ENCODE measurements at regions of chr1 and their contacts with region 1.

Region 1: DNA sequence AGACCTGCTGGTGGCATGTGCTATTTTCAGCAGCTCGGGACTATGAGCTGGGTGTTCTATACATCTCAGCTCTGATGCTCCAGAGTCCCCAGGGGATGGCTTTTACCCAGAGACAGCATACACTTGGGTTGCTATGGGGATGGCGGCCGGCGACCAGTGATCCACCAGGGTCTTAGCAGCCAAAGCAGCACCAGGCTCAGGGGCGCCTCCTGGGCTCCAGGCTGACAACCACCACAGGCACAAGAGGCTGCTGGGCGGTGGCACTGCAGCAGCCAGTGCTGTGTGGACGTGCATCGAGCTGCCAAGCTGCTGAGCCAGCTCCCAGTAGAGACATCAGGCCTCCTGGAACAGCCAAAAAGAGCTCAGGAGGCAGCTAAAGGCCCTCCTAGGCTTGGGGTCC is 37.6 kb upstream of the CLSTN1 start:
- DNase-seq: peak; percentile 55
- ATAC-seq: peak; percentile 62
- H3K4me3 Mint-ChIP-seq: no peak overlapping the region
- H3K27ac Mint-ChIP-seq: peak overlapping the region; percentile 57; the same call in 1 of the 2 replicates
- H3K4me1 Mint-ChIP-seq: peaks cover 19% of the 10 kb centered on the region
- H3K27me3 Mint-ChIP-seq: no peaks in the 10 kb centered on the region
- CTCF ChIP-seq: no peak

Region 2: GRCh38 chr1:9792156-9793042 is 69.0 kb before region 1 on chr1:
- CTCF ChIA-PET with region 1: interaction called, 71 read pairs
- POLR2A ChIA-PET with region 1: no interaction called
- DNase-seq: peak; percentile 62
- ATAC-seq: peak; percentile 95
- H3K4me3 Mint-ChIP-seq: 0 out of 2 replicates have a peak overlapping the region, but pooled peaks have one; percentile 9
- H3K27ac Mint-ChIP-seq: peak overlapping the region; percentile 96
- H3K4me1 Mint-ChIP-seq: peaks cover 58% of the 10 kb centered on the region
- H3K27me3 Mint-ChIP-seq: no peaks in the 10 kb centered on the region
- CTCF ChIP-seq: no peak

Region 3: DNA sequence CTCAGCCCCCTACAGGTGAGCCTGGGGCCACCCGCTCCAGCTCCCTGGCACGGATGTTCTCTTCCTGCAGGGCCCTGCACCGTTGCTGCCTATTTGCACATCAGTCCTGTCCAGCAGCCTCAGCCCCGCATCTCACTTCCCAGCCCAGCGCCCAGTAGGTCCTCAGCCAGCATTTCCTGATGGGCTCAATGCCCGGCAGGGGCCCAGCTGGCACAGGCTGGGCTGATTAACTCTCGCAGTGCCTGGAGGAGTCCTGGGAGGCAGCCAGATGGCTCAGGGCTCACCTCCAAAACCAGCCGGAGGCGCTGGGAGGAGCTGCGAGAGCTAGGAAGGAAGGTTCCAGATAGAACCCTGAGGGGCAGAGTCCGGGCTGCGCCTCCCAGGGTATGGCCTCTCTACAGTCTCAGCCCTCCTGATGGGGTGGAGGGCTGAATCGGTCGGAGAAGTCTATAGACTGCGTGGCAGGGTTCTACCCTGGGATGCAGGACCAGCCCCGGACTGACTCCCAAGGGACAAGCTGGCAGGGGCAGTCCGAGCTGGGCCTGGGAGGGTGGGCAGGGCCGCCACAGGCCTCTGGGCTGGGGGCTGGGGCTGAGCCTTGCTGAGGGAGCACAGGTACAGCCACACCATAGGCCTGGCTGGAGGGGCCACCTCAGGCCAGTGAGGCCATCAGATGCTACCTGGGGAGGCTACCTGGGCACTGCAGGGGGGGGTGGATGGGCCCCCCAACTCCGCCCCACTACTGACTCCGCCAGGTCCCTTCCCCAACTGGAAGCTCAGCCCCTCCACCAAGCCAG is 18.4 kb before region 1 on chr1:
- CTCF ChIA-PET with region 1: interaction called, 10 read pairs
- POLR2A ChIA-PET with region 1: interaction called, 3 read pairs
- DNase-seq: no peak
- ATAC-seq: peak; percentile 46
- H3K4me3 Mint-ChIP-seq: no peak overlapping the region
- H3K27ac Mint-ChIP-seq: no peak overlapping the region
- H3K4me1 Mint-ChIP-seq: peaks cover 18% of the 10 kb centered on the region
- H3K27me3 Mint-ChIP-seq: no peaks in the 10 kb centered on the region; the same call in 1 of the 2 replicates
- CTCF ChIP-seq: no peak